Dorsolateral prefrontal cortex (tissue), 120 donors: ENCODE measurements at regions of chr3 and their contacts with region 1.

Region 1: DNA sequence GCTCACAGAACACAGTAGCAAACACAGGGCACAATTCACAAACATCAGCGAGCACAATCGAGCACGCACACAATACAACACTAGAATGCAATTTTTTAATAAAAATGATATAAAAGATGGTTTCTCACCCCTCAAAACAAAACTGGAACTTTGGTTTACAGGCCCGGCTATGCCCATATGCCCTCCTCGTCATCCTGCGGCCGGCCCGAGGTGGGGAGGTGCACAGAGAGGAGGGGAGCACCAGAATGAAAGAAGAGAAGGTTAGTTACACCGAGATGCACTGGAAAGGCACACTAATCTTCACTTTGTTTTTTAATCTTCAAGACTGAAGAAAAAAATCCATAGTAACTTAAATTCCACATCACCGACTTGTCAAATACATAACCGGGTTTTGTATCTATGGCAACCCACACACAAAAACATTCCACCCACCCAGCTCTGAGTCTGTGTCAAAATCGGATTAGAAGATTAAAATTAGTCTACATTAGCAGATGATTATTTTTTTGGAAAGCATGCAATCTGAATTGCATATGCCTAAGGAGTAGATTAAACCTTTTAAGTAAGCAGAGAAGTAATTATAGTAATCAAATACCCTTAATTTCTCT is 196.7 kb upstream of the WNT5A start:
- DNase-seq: no peak
- H3K4me3 ChIP-seq: no peak overlapping the region
- H3K27ac ChIP-seq: no peak overlapping the region
- H3K27me3 ChIP-seq: no peaks in the 10 kb centered on the region
- CTCF ChIP-seq: no peak

Region 2: GRCh38 chr3:55322638-55323037 is 361.1 kb before region 1 on chr3:
- intact Hi-C with region 1: no loop called
- DNase-seq: peak in 6 of 10 donors; percentile 4 to 68 (median 42)
- H3K4me3 ChIP-seq: no peak overlapping the region
- H3K27ac ChIP-seq: no peak overlapping the region
- H3K27me3 ChIP-seq: peaks cover 0 to 2% (median 0%) of the 10 kb centered on the region in 45 donors
- CTCF ChIP-seq: no peak

Region 3: DNA sequence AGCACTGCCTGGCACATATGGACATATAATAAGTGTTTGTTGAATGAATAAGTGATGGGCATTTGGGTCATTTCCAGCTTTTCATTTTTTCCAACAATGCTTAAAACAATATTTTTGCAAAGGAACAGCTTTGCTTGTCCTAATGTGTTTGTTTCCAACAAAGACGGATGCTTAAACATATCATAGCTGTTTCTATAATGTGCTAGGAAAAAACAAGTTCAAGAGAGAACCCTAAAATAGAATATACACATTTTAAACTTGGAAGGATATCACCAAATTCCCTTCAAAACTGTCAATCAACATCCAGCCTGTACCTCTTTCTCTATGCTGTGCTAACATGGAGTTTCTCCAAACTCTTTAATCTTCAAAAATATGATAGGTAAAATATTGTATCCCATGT is 27.9 kb after region 1 on chr3:
- intact Hi-C with region 1: loop called in 1 of 2 experiments (anchors 2 kb)
- DNase-seq: no peak
- H3K4me3 ChIP-seq: no peak overlapping the region
- H3K27ac ChIP-seq: no peak overlapping the region
- H3K27me3 ChIP-seq: peaks cover 0 to 4% (median 0%) of the 10 kb centered on the region in 45 donors
- CTCF ChIP-seq: no peak

Region 4: DNA sequence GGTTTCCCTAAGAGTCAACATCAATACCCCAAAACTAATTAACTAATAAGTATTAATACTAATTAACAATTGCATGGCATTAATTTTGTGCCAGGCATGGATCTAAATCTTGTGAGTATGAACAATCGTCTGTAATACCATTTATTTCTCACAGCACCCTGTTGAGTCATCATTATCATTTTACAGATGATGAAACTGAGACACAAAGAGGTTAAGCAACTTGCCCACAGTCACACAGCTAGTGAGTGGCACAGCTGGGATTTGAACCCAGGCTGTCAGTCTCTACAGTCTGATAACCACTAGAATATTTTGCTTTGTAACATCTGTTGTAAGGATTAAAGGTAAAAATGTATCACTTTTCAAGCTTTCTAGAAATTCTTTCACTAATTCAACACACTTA is 226.8 kb after region 1 on chr3:
- intact Hi-C with region 1: no loop called
- DNase-seq: no peak
- H3K4me3 ChIP-seq: no peak overlapping the region
- H3K27ac ChIP-seq: no peak overlapping the region
- H3K27me3 ChIP-seq: no peaks in the 10 kb centered on the region
- CTCF ChIP-seq: no peak

Region 5: DNA sequence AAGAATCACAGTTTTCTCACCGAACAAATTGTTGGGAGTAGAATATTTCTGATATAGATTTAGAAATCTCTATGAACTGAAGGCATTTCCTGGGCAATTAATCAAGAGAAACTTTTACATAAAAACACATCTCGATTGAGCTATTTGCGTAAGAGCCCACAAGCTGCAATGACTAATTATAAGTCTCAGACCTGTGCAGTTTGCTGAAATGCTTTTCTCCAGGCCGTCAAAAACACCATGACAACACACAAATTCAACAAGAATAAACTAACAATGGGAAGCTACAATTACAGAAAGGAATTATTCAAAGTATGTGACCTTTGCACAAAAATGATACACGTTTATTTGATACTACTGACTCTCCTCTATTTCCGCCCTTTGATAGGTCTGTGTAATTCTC is 284.6 kb after region 1 on chr3:
- intact Hi-C with region 1: no loop called
- DNase-seq: no peak
- H3K4me3 ChIP-seq: no peak overlapping the region
- H3K27ac ChIP-seq: no peak overlapping the region
- H3K27me3 ChIP-seq: no peaks in the 10 kb centered on the region
- CTCF ChIP-seq: no peak